K562 (cell line): ENCODE measurements at regions of chr1 and their contacts with region 1.

Region 1: GRCh38 chr1:115595279-115596079 is 46.3 kb upstream of the VANGL1 start:
- DNase-seq: peak; percentile 75 to 82 (median 78)
- ATAC-seq: peak; percentile 100
- H3K4me3 ChIP-seq: no peak overlapping the region
- H3K27ac ChIP-seq: no peak overlapping the region
- H3K4me1 ChIP-seq: no peaks in the 10 kb centered on the region
- H3K27me3 ChIP-seq: no peaks in the 10 kb centered on the region
- CTCF ChIP-seq: peak; percentile 88 to 93 (median 93)
- EP300 ChIP-seq: no peak
- POLR2A ChIP-seq: no peak
- RAD21 ChIP-seq: peak; percentile 83 to 91

Region 2: DNA sequence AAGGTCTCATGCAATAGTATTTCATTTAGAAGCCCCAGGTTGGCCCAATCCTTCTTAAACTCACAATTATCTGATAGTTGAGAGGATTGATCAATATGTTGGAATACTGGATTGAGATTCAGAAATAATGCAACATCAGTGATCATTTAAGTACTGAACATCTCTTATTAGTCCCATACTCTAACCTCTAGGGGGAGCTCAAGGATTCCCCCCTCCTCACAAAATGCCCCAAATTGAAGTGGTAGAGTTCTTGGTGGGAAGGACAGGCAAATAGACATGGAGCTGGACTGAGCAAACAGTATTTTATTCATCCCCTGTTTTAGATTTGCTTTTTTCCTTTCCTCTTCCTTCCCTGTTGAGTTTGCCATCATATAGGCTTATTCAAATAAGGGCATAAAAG is 320.3 kb before region 1 on chr1:
- CTCF ChIA-PET with region 1: no interaction called
- POLR2A ChIA-PET with region 1: no interaction called
- in situ Hi-C with region 1: no loop called
- intact Hi-C with region 1: loop called (anchors 5 kb)
- DNase-seq: peak; percentile 30 to 58 (median 54)
- ATAC-seq: peak; percentile 59; the same call in 2 of the 3 replicates
- H3K4me3 ChIP-seq: no peak overlapping the region
- H3K27ac ChIP-seq: no peak overlapping the region
- H3K4me1 ChIP-seq: no peaks in the 10 kb centered on the region
- H3K27me3 ChIP-seq: no peaks in the 10 kb centered on the region
- CTCF ChIP-seq: peak; percentile 45 to 58 (median 58); a peak in 5 of 6 replicates
- EP300 ChIP-seq: no peak
- POLR2A ChIP-seq: no peak
- RAD21 ChIP-seq: peak in 1 of 2 experiments; percentile 39; a peak in 1 of 4 replicates